ENCODE measurements at regions of chr3 and their contacts with region 1.

Region 1: GRCh38 chr3:156674046-156674910 is at the start of gene TIPARP:
- DNase-seq: peak; percentile 97 to 99 (median 98)
- ATAC-seq: peak; percentile 90
- H3K4me3 ChIP-seq: peak within 1 kb of the TSS; percentile 89
- H3K27ac ChIP-seq: peak within 1 kb of the TSS; percentile 70
- H3K4me1 ChIP-seq: peaks cover 21 to 33% of the 10 kb centered on the region in 2 experiments; a peak in 4 of 5 replicates
- H3K27me3 ChIP-seq: no peaks in the 10 kb centered on the region
- CTCF ChIP-seq: peak; percentile 84 to 95 (median 94)
- EP300 ChIP-seq: no peak; the same call in 1 of the 2 replicates
- POLR2A ChIP-seq: peak; percentile 93
- RAD21 ChIP-seq: peak; percentile 95 to 98
- polyA plus RNA-seq, gene TIPARP: 2.4 to 3.5 TPM

Region 2: DNA sequence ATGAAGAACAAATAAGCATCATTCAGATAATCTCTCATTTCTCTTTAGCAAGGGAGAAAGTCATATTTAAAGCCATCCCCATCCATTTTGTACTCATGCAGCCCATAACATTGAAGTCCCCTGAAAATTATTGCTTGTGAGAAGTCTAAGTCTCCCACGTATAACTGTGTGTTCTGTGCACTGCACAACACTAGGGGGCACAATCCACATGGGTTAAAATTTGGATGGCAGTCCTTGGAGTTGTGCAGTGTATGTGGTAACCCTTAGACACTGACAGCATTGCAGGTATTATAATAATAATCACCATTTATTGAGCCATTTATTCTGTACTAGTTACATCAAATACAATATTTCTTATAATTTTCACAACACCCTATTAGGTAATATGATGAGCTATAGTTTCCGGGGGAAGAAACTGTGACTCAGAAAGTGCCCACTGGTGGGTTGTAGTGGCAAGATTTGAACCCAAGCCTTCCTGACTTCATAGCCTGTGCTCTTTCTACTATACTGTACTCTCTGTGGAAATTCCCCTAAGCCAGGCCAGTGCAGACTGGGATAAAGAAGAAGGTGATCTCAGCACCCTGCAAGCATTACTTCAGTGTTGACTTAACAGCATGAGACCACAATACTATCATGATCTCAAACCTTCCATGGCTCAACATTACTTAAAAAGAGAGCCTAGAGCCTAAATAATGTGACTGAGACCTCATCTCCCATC is 538.2 kb before region 1 on chr3:
- CTCF ChIA-PET with region 1: no interaction called
- POLR2A ChIA-PET with region 1: no interaction called
- in situ Hi-C with region 1: loop called (anchors 25 kb)
- intact Hi-C with region 1: no loop called
- DNase-seq: peak in 3 of 4 experiments; percentile 9 to 19 (median 19)
- ATAC-seq: peak; percentile 74
- H3K4me3 ChIP-seq: no peak overlapping the region
- H3K27ac ChIP-seq: no peak overlapping the region
- H3K4me1 ChIP-seq: no peaks in the 10 kb centered on the region
- H3K27me3 ChIP-seq: peaks cover 0 to 5% of the 10 kb centered on the region in 2 experiments; a peak in 1 of 5 replicates
- CTCF ChIP-seq: peak; percentile 41 to 46 (median 42); a peak in 3 of 6 replicates
- EP300 ChIP-seq: no peak
- POLR2A ChIP-seq: no peak
- RAD21 ChIP-seq: peak in 1 of 2 experiments; percentile 41; a peak in 2 of 4 replicates

Region 3: DNA sequence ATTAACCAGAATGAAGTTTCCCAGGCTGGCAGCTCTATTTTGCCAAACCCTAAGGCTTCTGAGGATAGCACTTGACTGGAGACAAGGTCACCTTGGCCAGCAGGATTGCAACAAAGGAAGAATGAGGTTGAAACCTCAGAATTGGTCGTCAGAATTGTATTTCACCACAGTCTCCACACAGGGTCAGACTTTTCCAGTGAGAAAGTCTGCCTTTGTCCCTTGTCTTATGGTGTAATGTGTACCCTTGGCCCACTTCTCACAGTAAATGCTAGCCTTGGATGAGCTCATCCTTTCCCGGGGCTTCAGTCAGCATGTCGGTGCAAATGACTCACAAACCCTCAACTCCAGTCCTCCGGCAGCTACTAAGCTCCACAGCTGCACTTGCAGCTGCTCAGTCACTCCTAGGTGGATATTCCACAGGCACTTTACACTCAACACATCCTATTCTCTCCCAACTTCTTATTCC is 139.1 kb before region 1 on chr3:
- CTCF ChIA-PET with region 1: interaction called, 8 read pairs
- POLR2A ChIA-PET with region 1: interaction called, 5 read pairs
- in situ Hi-C with region 1: no loop called
- intact Hi-C with region 1: loop called (anchors 1 kb)
- DNase-seq: peak in 2 of 4 experiments; percentile 44 to 65
- ATAC-seq: peak; percentile 87
- H3K4me3 ChIP-seq: no peak overlapping the region
- H3K27ac ChIP-seq: no peak overlapping the region
- H3K4me1 ChIP-seq: no peaks in the 10 kb centered on the region; a peak in 1 of 5 replicates
- H3K27me3 ChIP-seq: no peaks in the 10 kb centered on the region
- CTCF ChIP-seq: peak; percentile 22 to 48 (median 42); a peak in 4 of 6 replicates
- EP300 ChIP-seq: no peak
- POLR2A ChIP-seq: no peak
- RAD21 ChIP-seq: peak; percentile 13 to 74; a peak in 2 of 4 replicates

Region 4: DNA sequence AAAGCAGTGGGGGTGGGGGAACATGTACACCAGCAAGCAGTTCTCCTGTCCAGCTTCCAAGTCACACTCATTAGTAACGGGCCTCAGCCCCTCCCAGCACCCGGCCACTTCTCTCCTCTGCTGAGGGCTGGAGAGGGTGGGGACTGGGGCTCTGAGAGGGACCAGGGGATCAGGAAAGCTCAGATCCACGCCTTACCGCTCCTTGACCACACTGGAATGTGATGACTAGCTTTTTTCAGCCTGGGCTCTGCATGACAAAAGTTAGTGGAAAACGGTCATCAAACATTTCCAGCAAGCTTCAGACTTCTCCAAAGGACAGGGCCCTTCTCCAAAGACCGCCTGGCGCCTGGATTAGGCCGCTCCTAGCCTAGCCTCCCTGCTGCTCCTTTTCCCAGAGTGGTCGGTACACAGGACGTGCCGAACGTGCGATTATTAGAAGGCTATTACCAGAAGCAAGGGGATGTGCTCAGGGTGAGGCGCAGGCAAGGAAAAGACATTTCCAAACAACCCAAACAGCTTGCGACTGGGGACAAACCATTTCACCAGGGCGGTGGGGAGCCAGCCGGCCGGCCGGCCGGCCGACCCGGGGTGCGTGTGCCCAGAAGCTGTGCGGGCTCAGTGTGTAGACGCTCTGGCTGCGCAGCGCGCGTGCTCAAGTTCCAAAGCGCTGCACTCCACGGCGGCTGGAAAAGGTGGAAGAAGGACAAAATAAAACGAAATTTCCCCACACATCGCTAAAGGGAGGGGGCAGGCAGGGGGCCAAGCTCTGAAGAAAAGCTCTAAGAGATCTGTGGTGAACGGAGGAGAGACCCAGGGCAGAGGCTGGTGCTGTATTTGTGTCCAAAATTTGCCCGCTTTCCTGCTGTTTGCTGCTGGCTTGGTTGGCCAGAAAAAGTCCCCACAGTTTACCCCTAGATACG is 68.3 kb before region 1 on chr3:
- CTCF ChIA-PET with region 1: no interaction called
- POLR2A ChIA-PET with region 1: interaction called, 3 read pairs
- in situ Hi-C with region 1: no loop called
- intact Hi-C with region 1: loop called (anchors 1 kb)
- DNase-seq: peak; percentile 69 to 93 (median 76)
- ATAC-seq: peak; percentile 86
- H3K4me3 ChIP-seq: peak overlapping the region; percentile 39
- H3K27ac ChIP-seq: peak overlapping the region; percentile 96
- H3K4me1 ChIP-seq: peaks cover 18 to 44% of the 10 kb centered on the region in 2 experiments
- H3K27me3 ChIP-seq: no peaks in the 10 kb centered on the region
- CTCF ChIP-seq: no peak
- EP300 ChIP-seq: peak; percentile 49
- POLR2A ChIP-seq: peak; percentile 87
- RAD21 ChIP-seq: no peak

Region 5: DNA sequence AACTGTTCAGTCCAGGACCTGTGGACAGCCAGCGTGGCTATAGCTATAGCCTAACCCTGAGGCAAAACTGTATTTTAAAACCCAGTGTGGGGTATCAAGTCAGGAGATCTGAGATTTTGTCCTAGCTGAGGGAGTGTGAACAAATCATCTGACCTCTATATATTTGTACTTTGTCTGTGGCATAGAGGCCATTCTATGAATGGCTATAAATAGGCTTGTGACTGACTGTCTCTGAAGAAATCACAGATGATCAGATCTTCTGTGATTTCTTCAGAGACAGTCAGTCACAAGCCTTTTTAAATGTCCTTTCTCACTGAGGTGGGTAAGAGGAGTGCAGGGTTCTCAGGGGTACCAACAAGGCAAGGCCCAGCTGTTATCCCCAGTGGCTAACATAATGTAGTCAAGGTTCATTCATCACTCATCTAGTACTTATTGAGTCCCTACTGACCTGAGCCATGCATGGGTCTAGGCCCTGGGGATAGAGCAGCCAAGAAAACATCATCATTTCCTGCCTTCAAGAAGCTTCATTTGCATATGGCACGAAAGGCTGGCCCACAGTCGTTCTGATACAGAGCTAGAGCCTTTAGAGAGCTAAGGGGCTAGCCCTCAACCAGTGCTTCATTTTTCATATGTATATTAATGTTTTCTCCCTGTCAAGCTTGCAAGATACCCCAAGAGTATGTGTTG is 53.4 kb after region 1 on chr3:
- CTCF ChIA-PET with region 1: no interaction called
- POLR2A ChIA-PET with region 1: no interaction called
- in situ Hi-C with region 1: no loop called
- intact Hi-C with region 1: no loop called
- DNase-seq: no peak
- ATAC-seq: no peak
- H3K4me3 ChIP-seq: no peak overlapping the region
- H3K27ac ChIP-seq: no peak overlapping the region
- H3K4me1 ChIP-seq: no peaks in the 10 kb centered on the region; a peak in 1 of 5 replicates
- H3K27me3 ChIP-seq: no peaks in the 10 kb centered on the region
- CTCF ChIP-seq: no peak
- EP300 ChIP-seq: no peak
- POLR2A ChIP-seq: no peak
- RAD21 ChIP-seq: no peak

Region 6: GRCh38 chr3:156826144-156826895 is 152.0 kb after region 1 on chr3 and contains the start of gene LEKR1:
- CTCF ChIA-PET with region 1: no interaction called
- POLR2A ChIA-PET with region 1: no interaction called
- in situ Hi-C with region 1: no loop called
- intact Hi-C with region 1: loop called (anchors 5 kb)
- DNase-seq: peak; percentile 84 to 91 (median 86)
- ATAC-seq: peak; percentile 90
- H3K4me3 ChIP-seq: peak within 1 kb of the TSS; percentile 52
- H3K27ac ChIP-seq: peak within 1 kb of the TSS; percentile 97
- H3K4me1 ChIP-seq: peaks cover 13 to 18% of the 10 kb centered on the region in 2 experiments; a peak in 4 of 5 replicates
- H3K27me3 ChIP-seq: no peaks in the 10 kb centered on the region
- CTCF ChIP-seq: no peak
- EP300 ChIP-seq: peak; percentile 9; the same call in 1 of the 2 replicates
- POLR2A ChIP-seq: peak; percentile 96
- RAD21 ChIP-seq: no peak
- polyA plus RNA-seq, gene LEKR1: 1.3 to 1.8 TPM

Region 7: GRCh38 chr3:157136647-157137387 is 462.5 kb after region 1 on chr3:
- CTCF ChIA-PET with region 1: interaction called, 48 read pairs
- POLR2A ChIA-PET with region 1: no interaction called
- in situ Hi-C with region 1: no loop called
- intact Hi-C with region 1: loop called (anchors 1 kb)
- DNase-seq: no peak
- ATAC-seq: peak; percentile 30; the same call in 2 of the 3 replicates
- H3K4me3 ChIP-seq: no peak overlapping the region
- H3K27ac ChIP-seq: no peak overlapping the region
- H3K4me1 ChIP-seq: peaks cover 8 to 16% of the 10 kb centered on the region in 2 experiments; a peak in 4 of 5 replicates
- H3K27me3 ChIP-seq: no peaks in the 10 kb centered on the region
- CTCF ChIP-seq: no peak
- EP300 ChIP-seq: no peak
- POLR2A ChIP-seq: no peak
- RAD21 ChIP-seq: peak in 1 of 2 experiments; percentile 5; a peak in 1 of 4 replicates